Activated B cell treated with CpG ODN at 0.5 μM for 24 hours (primary cell): ENCODE measurements at regions of chr11 and their contacts with region 1.

Region 1: DNA sequence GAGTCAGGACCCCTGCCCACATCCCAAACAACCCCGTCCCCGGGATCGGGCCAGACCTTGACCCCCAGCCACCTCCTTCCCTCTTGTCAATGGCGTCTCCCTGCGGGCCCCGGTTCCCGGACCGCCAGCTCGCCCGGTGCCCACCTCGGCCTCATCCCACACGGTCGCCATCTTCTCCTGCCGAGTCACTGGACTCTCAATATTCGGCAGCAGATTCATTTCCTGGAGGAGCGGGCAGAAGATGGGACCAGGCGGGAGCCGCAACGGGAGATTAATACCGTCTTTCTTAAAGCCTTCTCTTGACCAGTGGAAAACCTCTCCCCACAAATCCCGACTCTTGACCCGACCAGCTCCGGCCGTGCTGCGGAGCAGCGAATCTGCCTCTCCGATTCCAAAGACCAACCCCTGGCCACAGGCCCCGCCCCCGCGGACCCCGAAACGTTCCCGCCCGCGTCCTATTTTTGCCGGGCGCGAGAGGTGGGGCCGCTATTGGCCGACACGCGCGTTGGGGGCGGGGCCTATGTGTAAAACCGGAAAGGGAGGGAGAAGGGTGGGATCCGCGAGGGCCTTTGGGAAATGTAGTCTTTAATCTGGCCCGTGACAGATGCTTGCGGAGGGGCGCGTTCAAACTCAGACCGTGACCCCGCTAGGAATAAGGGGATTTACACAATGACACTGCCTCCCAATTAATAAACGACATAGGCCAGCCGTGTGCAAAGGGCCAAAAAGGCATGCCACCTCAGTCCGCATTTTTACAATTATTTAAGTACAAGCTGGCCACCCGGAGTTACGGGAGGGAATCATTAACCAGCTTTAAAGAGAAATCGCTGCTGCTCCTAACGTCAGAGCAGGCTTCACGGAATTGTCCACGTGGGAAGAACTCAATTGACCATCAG is at the start of gene PSMC3:
- DNase-seq: peak; percentile 96
- ATAC-seq: peak; percentile 98
- H3K4me3 Mint-ChIP-seq: peak within 1 kb of the TSS; percentile 99
- H3K27ac Mint-ChIP-seq: peak within 1 kb of the TSS; percentile 99
- H3K4me1 Mint-ChIP-seq: peaks cover 20% of the 10 kb centered on the region
- H3K27me3 Mint-ChIP-seq: no peaks in the 10 kb centered on the region
- CTCF ChIP-seq: no peak
- total RNA-seq, gene PSMC3: 101 and 126 TPM in 2 replicates

Region 2: DNA sequence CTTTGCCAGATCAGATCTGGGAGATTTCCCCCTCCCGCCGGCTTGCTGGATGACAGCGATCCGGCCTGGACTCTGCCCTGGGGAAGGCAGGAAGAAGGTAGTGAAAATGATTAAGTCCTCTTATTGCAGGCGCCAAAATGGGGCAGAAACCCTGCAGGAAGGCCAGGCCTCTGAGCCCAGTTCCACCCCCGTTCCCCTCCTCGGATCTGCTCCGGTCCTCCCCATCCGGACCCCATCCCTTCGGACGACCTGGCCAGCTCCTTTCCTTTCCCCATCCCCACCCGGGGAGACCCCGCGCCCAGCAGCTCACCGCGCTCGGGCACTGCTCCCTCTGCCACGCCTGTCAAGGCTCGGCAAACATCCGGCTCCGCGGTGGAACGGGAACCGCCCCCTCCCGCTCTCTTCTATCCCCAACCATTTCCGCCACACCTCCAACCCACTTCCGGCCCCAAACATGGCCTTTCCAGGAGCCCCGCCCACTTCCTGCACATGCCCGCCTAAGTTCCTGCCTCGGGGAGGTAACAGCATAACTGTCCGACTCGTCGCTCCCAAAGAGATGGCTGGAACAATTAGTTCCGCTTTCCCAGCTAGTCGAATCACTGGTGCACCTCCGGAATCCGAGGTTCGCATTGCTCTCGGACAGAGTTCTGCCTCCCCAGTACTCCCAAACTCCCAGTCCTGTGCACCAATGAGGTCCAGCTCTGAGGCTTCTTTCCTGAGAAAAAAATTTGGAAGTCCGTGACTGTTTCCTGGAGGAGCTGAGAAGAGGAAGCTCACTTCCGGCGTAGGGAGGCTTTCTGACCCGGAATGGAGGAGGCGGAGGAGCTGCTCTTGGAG is 725.9 kb before region 1 on chr11 and contains the starts of genes ARHGAP1 and ZNF408:
- CTCF ChIA-PET with region 1: no interaction called
- POLR2A ChIA-PET with region 1: no interaction called
- intact Hi-C with region 1: loop called (anchors 1 kb)
- DNase-seq: peak; percentile 96
- ATAC-seq: peak; percentile 87
- H3K4me3 Mint-ChIP-seq: peak within 1 kb of the TSS; percentile 99
- H3K27ac Mint-ChIP-seq: peak within 1 kb of the TSS; percentile 95
- H3K4me1 Mint-ChIP-seq: peaks cover 51% of the 10 kb centered on the region
- H3K27me3 Mint-ChIP-seq: no peaks in the 10 kb centered on the region
- CTCF ChIP-seq: no peak
- total RNA-seq, gene ARHGAP1: 47.6 and 58.0 TPM in 2 replicates
- total RNA-seq, gene ZNF408: 15.6 and 16.1 TPM in 2 replicates

Region 3: GRCh38 chr11:47176328-47177228 is 249.7 kb before region 1 on chr11 and contains the start of gene ARFGAP2:
- CTCF ChIA-PET with region 1: no interaction called
- POLR2A ChIA-PET with region 1: interaction called, 3 read pairs
- intact Hi-C with region 1: loop called (anchors 1 kb)
- DNase-seq: peak; percentile 92
- ATAC-seq: peak; percentile 93
- H3K4me3 Mint-ChIP-seq: peak within 1 kb of the TSS; percentile 98
- H3K27ac Mint-ChIP-seq: peak within 1 kb of the TSS; percentile 99
- H3K4me1 Mint-ChIP-seq: peaks cover 35% of the 10 kb centered on the region
- H3K27me3 Mint-ChIP-seq: no peaks in the 10 kb centered on the region
- CTCF ChIP-seq: no peak
- total RNA-seq, gene ARFGAP2: 145 and 176 TPM in 2 replicates

Region 4: DNA sequence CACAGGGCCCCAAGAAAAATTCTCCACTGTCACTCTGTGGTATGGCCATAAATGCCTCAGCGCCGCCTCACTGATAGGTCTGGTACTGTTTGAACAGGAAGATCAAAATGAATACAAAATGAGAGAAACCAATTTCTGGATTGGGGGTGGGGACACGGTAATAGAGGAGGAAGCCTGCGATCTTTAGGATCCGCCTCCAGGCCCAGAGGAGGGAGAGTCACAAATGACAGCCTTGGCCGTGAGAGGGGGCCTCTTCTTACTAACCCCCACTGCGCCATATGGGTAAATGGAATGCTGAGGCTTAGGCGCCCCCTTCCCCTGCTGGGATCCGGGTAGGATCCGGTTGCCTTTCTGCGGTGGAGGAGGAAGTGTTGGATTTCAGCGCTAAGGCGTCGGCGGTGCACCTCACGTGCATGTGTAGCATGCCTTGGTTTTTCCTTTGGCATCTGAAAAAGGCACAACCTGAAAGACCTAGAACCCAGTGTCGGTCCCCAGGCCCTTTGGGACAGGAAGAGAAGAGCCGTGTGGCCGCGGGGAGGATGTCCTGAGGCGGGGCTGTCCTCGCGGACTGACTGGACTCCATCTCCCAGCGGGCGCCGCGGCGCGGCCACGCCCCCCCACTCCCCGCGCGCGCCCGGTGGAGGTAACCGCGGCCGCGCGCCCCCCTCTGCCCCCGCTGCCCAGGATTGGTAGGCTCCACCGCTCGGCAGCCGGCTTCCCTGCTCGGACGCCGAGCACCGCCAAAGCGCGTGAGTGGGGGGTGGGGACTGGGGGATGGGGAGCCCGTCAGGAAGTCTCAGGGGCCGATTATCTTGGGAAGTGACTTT is 157.1 kb before region 1 on chr11:
- CTCF ChIA-PET with region 1: interaction called, 3 read pairs
- POLR2A ChIA-PET with region 1: interaction called, 6 read pairs
- intact Hi-C with region 1: loop called (anchors 1 kb)
- DNase-seq: peak; percentile 88
- ATAC-seq: peak; percentile 62
- H3K4me3 Mint-ChIP-seq: peak overlapping the region; percentile 93
- H3K27ac Mint-ChIP-seq: peak overlapping the region; percentile 97
- H3K4me1 Mint-ChIP-seq: peaks cover 59% of the 10 kb centered on the region
- H3K27me3 Mint-ChIP-seq: no peaks in the 10 kb centered on the region
- CTCF ChIP-seq: no peak

Region 5: GRCh38 chr11:47394322-47395222 is 31.7 kb before region 1 on chr11:
- CTCF ChIA-PET with region 1: no interaction called
- POLR2A ChIA-PET with region 1: interaction called, 6 read pairs
- intact Hi-C with region 1: loop called (anchors 1 kb)
- DNase-seq: peak; percentile 56
- ATAC-seq: peak; percentile 81
- H3K4me3 Mint-ChIP-seq: peak overlapping the region; percentile 64
- H3K27ac Mint-ChIP-seq: peak overlapping the region; percentile 95
- H3K4me1 Mint-ChIP-seq: peaks cover 70% of the 10 kb centered on the region
- H3K27me3 Mint-ChIP-seq: no peaks in the 10 kb centered on the region
- CTCF ChIP-seq: no peak

Region 6: GRCh38 chr11:47552566-47553416 is 126.5 kb after region 1 on chr11 and contains the start of gene CELF1:
- CTCF ChIA-PET with region 1: no interaction called
- POLR2A ChIA-PET with region 1: interaction called, 3 read pairs
- intact Hi-C with region 1: loop called (anchors 1 kb)
- DNase-seq: peak; percentile 93
- ATAC-seq: peak; percentile 94
- H3K4me3 Mint-ChIP-seq: peak within 1 kb of the TSS; percentile 96
- H3K27ac Mint-ChIP-seq: peak within 1 kb of the TSS; percentile 97
- H3K4me1 Mint-ChIP-seq: peaks cover 49% of the 10 kb centered on the region
- H3K27me3 Mint-ChIP-seq: no peaks in the 10 kb centered on the region
- CTCF ChIP-seq: peak; percentile 33
- total RNA-seq, gene CELF1: 129 and 136 TPM in 2 replicates

Region 7: GRCh38 chr11:47631473-47631872 is 205.2 kb after region 1 on chr11:
- CTCF ChIA-PET with region 1: no interaction called
- POLR2A ChIA-PET with region 1: no interaction called
- intact Hi-C with region 1: no loop called
- DNase-seq: no peak
- ATAC-seq: no peak
- H3K4me3 Mint-ChIP-seq: no peak overlapping the region
- H3K27ac Mint-ChIP-seq: no peak overlapping the region
- H3K4me1 Mint-ChIP-seq: no peaks in the 10 kb centered on the region
- H3K27me3 Mint-ChIP-seq: no peaks in the 10 kb centered on the region
- CTCF ChIP-seq: no peak

Region 8: DNA sequence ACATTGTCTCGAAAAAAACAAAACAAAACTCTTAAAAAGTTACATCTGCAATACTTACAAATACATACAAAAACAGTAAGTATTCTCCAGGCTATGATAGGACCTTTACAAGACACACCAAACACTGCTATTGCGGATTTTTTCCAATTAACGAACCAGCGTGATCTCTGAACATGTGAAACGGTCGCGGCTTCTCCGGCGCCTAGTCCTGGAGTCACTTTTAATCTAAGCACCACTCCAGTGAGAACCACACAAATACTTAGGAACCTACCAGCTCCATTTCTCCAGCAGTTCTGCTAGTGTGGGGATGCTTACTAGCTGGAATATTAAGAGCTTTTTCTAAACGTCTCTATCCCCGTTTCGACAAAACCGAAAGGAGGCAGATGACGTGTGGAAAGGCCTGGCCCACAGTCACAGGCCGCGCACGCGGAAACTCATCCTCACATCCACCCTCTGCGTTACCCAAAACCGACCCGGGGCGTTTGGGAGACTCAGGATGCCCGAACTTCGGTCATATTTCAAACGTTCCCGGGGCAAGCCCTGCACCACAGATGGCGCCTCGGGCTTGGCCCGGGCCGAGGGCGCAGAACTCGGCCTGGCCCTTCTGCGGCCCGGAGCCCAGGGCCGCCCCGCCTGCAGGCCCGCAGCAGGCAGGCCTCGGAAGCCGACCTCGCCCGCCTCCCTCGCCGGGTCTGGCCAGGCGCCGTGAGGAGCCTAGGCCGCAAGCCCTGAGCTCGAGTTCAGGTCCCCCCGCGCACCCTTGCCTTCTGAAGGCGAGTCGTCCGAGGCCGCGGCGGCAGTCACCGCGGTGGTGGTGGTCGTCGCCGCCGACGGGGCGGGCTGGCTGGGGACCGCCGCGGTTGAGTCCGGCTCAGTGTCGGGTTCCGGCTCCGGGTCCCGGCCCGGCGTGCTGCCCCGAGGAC is 340.3 kb after region 1 on chr11:
- CTCF ChIA-PET with region 1: no interaction called
- POLR2A ChIA-PET with region 1: no interaction called
- intact Hi-C with region 1: loop called (anchors 2 kb)
- DNase-seq: peak; percentile 63
- ATAC-seq: peak; percentile 20
- H3K4me3 Mint-ChIP-seq: peak overlapping the region; percentile 97
- H3K27ac Mint-ChIP-seq: peak overlapping the region; percentile 100
- H3K4me1 Mint-ChIP-seq: peaks cover 33% of the 10 kb centered on the region
- H3K27me3 Mint-ChIP-seq: no peaks in the 10 kb centered on the region
- CTCF ChIP-seq: no peak